Endothelial cell of umbilical vein (primary cell): ENCODE measurements at regions of chr15 and their contacts with region 1.

Region 1: DNA sequence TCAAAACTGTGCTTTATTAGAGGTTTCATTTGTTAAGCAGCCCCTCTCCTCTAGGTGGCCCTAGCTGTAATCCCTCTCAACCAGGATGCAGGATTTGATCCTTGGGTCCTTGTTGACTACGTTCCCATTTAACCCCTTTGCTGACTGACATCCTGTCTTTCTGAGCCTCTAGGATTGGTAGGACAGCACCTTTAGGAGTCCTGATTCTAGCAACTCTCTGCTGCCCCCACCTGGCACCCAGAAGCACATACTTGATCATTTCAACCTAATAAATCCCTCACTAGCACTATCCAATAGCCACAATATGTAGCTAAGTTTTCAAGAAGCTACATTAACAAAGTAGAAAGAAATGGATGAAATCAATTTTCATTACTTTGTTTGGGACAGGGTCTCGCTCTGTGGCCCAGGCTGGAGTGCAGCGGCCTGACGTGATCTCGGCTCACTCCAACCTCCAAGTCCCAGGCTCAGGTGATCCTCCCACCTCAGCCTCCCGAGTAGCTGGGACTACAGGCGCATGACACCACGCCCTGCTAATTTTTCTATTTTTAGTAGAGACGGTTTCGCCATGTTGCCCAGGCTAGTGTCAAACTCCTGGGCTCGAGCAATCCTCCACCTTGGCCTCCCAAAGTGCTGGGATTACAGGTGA is 28.3 kb downstream of the RSL24D1 start:
- DNase-seq: peak; percentile 77
- H3K4me3 ChIP-seq: no peak overlapping the region
- H3K27ac ChIP-seq: no peak overlapping the region
- H3K4me1 ChIP-seq: no peaks in the 10 kb centered on the region
- H3K27me3 ChIP-seq: no peaks in the 10 kb centered on the region
- CTCF ChIP-seq: peak; percentile 74 to 81
- POLR2A ChIP-seq: no peak

Region 2: GRCh38 chr15:55007561-55007960 is 160.9 kb before region 1 on chr15:
- CTCF ChIA-PET with region 1: no interaction called
- POLR2A ChIA-PET with region 1: no interaction called
- dilution Hi-C with region 1: no loop called
- intact Hi-C with region 1: no loop called
- DNase-seq: no peak
- H3K4me3 ChIP-seq: no peak overlapping the region
- H3K27ac ChIP-seq: no peak overlapping the region
- H3K4me1 ChIP-seq: no peaks in the 10 kb centered on the region
- H3K27me3 ChIP-seq: no peaks in the 10 kb centered on the region
- CTCF ChIP-seq: no peak
- POLR2A ChIP-seq: no peak

Region 3: GRCh38 chr15:55126111-55126510 is 42.3 kb before region 1 on chr15:
- CTCF ChIA-PET with region 1: no interaction called
- POLR2A ChIA-PET with region 1: no interaction called
- dilution Hi-C with region 1: no loop called
- intact Hi-C with region 1: no loop called
- DNase-seq: no peak
- H3K4me3 ChIP-seq: no peak overlapping the region
- H3K27ac ChIP-seq: no peak overlapping the region
- H3K4me1 ChIP-seq: no peaks in the 10 kb centered on the region
- H3K27me3 ChIP-seq: no peaks in the 10 kb centered on the region
- CTCF ChIP-seq: no peak
- POLR2A ChIP-seq: no peak

Region 4: DNA sequence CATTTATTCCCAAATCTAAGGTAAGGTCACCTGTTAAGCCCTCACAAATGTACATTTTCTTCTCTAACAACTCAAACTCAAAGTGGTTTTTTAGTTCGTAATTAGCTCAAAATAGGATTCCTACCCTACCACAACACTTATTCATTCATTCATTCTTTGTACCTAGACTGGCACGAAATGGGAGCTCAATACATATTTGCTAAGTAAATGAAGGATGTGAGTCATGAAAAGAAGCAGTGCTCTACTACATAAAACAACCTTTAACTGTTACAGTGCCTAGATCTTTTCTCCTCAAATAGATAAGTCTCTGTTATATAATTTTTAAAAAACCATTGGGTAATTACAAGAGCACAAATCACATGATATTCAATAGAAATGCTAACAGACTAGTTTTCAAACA is 15.2 kb after region 1 on chr15:
- CTCF ChIA-PET with region 1: interaction called, 13 read pairs
- POLR2A ChIA-PET with region 1: no interaction called
- dilution Hi-C with region 1: no loop called
- intact Hi-C with region 1: no loop called
- DNase-seq: no peak
- H3K4me3 ChIP-seq: no peak overlapping the region
- H3K27ac ChIP-seq: no peak overlapping the region
- H3K4me1 ChIP-seq: peaks cover 10% of the 10 kb centered on the region
- H3K27me3 ChIP-seq: no peaks in the 10 kb centered on the region
- CTCF ChIP-seq: no peak
- POLR2A ChIP-seq: no peak